ENCODE measurements at regions of chr1 and their contacts with region 1.

Region 1: DNA sequence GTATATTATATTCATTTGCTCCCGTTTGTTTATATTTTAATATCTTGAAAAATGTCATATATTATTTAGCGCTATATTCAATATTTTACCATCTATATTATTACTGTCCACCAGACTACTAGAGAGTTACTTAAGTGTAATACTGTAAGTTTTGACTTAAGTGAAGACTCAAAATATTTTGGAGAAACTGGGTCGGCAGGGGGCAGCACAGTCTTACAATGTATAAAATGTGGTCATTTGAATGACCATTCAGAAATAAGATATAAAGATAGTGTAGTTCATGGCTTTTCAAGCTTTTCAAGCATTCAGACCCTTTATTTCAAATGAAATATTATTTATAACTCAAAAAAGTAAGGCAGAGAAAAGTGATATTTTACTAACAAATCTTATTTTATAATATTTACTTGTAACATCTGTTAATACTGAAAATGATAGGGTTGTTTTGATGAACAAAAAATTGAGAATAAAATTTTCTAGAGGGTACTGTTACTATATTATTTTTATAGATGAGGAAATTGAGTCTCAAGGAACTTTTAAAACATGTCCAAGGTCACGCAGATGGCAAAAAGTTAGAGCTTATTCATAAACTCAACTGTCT is 89.0 kb upstream of the SERTAD4 start:
- DNase-seq: peak; percentile 47 to 78 (median 61)
- ATAC-seq: peak in 1 of 4 donors; percentile 51
- H3K4me3 ChIP-seq: no peak overlapping the region
- H3K27ac ChIP-seq: no peak overlapping the region
- H3K4me1 ChIP-seq: no peaks in the 10 kb centered on the region
- H3K27me3 ChIP-seq: peaks cover 0 to 7% (median 0%) of the 10 kb centered on the region in 9 donors
- CTCF ChIP-seq: peak; percentile 55 to 80 (median 68)
- POLR2A ChIP-seq: no peak

Region 2: DNA sequence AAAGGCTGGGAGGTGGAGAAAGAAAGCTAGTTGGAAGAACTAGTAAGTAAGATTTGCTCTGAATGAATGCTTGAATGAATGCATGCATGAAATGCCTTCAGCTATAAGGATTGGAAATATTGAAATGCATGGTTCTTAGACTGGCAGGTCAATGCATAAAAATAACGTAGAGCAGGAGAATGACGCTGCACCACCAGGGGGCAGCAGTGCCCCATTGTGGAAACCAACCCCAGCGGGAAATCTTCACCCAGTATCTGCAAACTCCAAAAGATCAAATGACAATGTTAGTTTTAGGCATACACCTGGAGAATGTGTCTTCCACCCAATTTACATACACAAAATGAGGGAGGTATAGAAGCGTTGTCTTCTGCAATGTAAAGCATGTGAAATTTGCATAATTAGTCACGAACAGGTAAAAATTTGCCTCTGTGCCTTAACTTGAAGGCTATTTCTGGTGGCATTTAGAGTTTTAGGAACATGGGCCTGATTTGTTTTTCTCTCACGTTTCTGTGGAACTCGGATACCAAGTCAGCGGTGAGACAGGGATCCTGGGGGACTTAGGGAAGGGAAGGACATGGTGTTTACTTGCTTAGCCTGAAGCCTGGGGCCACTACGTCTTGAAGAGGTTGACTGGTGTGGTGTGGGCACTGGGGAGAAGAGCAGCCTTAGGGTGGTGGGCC is 263.8 kb after region 1 on chr1:
- intact Hi-C with region 1: loop called in 5 of 10 experiments (anchors 5 kb)
- DNase-seq: peak; percentile 33 to 77 (median 44)
- ATAC-seq: peak in 2 of 4 donors; percentile 63 to 68
- H3K4me3 ChIP-seq: no peak overlapping the region
- H3K27ac ChIP-seq: no peak overlapping the region
- H3K4me1 ChIP-seq: no peaks in the 10 kb centered on the region
- H3K27me3 ChIP-seq: no peaks in the 10 kb centered on the region
- CTCF ChIP-seq: peak; percentile 88 to 99 (median 96)
- POLR2A ChIP-seq: no peak